GM23248 (cell line): ENCODE measurements at regions of chr12 and their contacts with region 1.

Region 1: DNA sequence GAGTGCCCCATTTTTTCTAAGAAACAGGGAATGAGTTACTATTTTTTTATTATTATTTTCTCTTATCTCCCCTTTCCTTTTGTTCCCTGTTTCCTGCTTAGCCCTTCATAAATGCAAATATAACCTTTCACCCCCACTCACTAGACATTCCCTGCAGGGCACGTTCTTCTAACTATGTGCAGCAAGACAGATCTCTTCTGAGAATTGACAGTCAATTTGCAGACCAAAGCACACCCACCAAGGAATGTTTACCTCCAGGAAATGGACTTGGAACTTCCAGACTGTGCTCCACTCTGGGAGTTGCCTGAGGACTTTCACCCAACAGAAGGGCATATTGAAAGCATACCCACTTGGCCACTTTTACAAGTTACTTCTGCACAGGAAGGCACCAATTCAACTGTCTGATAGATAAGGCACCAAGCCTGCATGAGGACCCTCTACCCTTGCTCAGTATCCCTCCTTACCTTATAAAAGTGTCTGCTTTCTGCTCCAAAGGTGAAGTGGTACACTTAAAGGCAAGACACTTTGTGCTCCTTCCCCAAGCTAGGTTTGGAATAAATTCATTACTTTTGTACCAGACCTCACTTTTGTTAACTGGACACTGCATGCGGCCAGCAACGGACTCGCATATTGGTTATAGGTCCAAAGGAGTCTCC is 6.5 kb downstream of the TAS2R19 start:
- DNase-seq: no peak
- H3K4me3 ChIP-seq: no peak overlapping the region
- H3K27ac ChIP-seq: no peak overlapping the region
- H3K4me1 ChIP-seq: no peaks in the 10 kb centered on the region
- H3K27me3 ChIP-seq: no peaks in the 10 kb centered on the region

Region 2: GRCh38 chr12:10802587-10802986 is 213.3 kb before region 1 on chr12 and contains the start of gene TAS2R7:
- in situ Hi-C with region 1: no loop called
- DNase-seq: no peak
- H3K4me3 ChIP-seq: no peak within 1 kb of the TSS
- H3K27ac ChIP-seq: no peak within 1 kb of the TSS
- H3K4me1 ChIP-seq: no peaks in the 10 kb centered on the region
- H3K27me3 ChIP-seq: 0 out of 2 replicates have a peak, but pooled peaks cover 7% of the 10 kb centered on the region
- total RNA-seq, gene TAS2R7: not detected in 2 replicates

Region 3: DNA sequence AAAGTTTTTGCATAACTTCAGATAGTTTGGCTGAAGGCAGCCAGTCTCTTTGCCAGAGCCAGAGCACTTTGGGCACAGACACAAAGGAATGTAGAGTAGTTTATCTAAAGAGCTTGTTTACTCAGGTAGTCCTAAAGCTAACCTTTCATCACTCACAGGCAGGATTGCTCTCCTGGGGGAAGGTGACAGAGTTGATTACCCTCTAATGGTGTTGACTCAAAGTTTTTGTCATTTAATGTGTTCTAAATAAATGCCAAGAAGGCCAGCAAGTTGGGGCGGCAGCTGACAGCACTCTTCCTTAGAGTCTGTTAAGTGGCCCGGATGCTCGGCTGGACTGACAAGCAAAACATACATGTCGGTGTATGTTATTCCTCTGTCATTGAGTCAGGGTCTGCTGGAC is 55.5 kb after region 1 on chr12:
- in situ Hi-C with region 1: loop called (anchors 5 kb)
- DNase-seq: no peak
- H3K4me3 ChIP-seq: no peak overlapping the region
- H3K27ac ChIP-seq: no peak overlapping the region
- H3K4me1 ChIP-seq: no peaks in the 10 kb centered on the region; the same call in 1 of the 2 replicates
- H3K27me3 ChIP-seq: no peaks in the 10 kb centered on the region

Region 4: GRCh38 chr12:11540615-11541310 is 524.9 kb after region 1 on chr12:
- in situ Hi-C with region 1: no loop called
- DNase-seq: no peak
- H3K4me3 ChIP-seq: no peak overlapping the region
- H3K27ac ChIP-seq: no peak overlapping the region
- H3K4me1 ChIP-seq: no peaks in the 10 kb centered on the region
- H3K27me3 ChIP-seq: 0 out of 2 replicates have a peak, but pooled peaks cover 2% of the 10 kb centered on the region

Region 5: DNA sequence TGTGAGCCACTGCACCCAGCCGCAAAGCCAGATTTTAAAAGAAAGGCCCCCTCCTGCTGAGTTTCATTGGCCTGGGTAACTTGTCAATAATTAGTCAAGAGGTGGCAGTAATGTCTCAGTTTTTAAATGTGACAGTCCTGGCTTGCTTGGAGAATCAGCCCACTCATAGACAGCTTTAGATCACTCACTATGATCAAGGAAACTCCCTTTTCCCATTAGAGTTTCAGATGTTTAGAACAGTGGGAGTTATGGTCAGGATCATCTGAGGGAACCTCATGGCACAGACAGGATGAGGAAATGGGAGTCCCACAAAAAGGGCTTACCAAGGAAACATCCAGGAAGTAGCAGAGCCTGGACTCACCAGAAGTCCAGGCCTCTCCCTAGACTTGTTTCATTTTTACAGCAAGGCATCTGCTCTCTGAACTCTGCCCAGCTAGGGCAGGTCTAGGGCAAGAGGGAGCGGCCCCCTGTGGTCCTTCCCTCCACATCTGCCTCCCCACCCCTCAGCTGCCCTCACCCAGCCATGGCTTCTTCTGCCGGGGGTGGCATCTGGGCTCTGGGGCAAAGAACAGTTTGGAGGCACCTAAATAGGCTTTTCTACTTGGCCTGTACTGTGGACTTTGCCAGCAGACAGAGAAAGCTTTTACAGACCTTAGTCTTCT is 1066.1 kb after region 1 on chr12:
- in situ Hi-C with region 1: no loop called
- DNase-seq: peak; percentile 73
- H3K4me3 ChIP-seq: no peak overlapping the region
- H3K27ac ChIP-seq: peak overlapping the region; percentile 18; the same call in 1 of the 2 replicates
- H3K4me1 ChIP-seq: peaks cover 10% of the 10 kb centered on the region; the same call in 1 of the 2 replicates
- H3K27me3 ChIP-seq: no peaks in the 10 kb centered on the region